Activated CD4-positive, alpha-beta T cell treated with anti-CD3 and anti-CD28 coated beads for 36 hours (primary cell): ENCODE measurements at regions of chr11 and their contacts with region 1.

Region 1: GRCh38 chr11:73376160-73376802 is at the start of gene RELT:
- DNase-seq: peak; percentile 96
- ATAC-seq: peak; percentile 94
- H3K4me3 Mint-ChIP-seq: peak within 1 kb of the TSS; percentile 92
- H3K27ac Mint-ChIP-seq: peak within 1 kb of the TSS; percentile 93
- H3K4me1 Mint-ChIP-seq: peaks cover 33% of the 10 kb centered on the region
- H3K27me3 Mint-ChIP-seq: no peaks in the 10 kb centered on the region
- total RNA-seq, gene RELT: 18.5 to 21.3 TPM

Region 2: GRCh38 chr11:73242251-73243079 is 133.8 kb before region 1 on chr11:
- CTCF ChIA-PET with region 1: no interaction called
- POLR2A ChIA-PET with region 1: no interaction called
- intact Hi-C with region 1: no loop called
- DNase-seq: peak; percentile 87
- ATAC-seq: peak; percentile 93
- H3K4me3 Mint-ChIP-seq: no peak overlapping the region
- H3K27ac Mint-ChIP-seq: no peak overlapping the region
- H3K4me1 Mint-ChIP-seq: peaks cover 2% of the 10 kb centered on the region
- H3K27me3 Mint-ChIP-seq: no peaks in the 10 kb centered on the region

Region 3: GRCh38 chr11:73307323-73308002 is 68.8 kb before region 1 on chr11:
- CTCF ChIA-PET with region 1: no interaction called
- POLR2A ChIA-PET with region 1: no interaction called
- intact Hi-C with region 1: loop called in 1 of 2 experiments (anchors 1 kb)
- DNase-seq: peak; percentile 96
- ATAC-seq: peak; percentile 82
- H3K4me3 Mint-ChIP-seq: peak overlapping the region; percentile 80
- H3K27ac Mint-ChIP-seq: no peak overlapping the region
- H3K4me1 Mint-ChIP-seq: peaks cover 5% of the 10 kb centered on the region
- H3K27me3 Mint-ChIP-seq: peaks cover 20% of the 10 kb centered on the region

Region 4: DNA sequence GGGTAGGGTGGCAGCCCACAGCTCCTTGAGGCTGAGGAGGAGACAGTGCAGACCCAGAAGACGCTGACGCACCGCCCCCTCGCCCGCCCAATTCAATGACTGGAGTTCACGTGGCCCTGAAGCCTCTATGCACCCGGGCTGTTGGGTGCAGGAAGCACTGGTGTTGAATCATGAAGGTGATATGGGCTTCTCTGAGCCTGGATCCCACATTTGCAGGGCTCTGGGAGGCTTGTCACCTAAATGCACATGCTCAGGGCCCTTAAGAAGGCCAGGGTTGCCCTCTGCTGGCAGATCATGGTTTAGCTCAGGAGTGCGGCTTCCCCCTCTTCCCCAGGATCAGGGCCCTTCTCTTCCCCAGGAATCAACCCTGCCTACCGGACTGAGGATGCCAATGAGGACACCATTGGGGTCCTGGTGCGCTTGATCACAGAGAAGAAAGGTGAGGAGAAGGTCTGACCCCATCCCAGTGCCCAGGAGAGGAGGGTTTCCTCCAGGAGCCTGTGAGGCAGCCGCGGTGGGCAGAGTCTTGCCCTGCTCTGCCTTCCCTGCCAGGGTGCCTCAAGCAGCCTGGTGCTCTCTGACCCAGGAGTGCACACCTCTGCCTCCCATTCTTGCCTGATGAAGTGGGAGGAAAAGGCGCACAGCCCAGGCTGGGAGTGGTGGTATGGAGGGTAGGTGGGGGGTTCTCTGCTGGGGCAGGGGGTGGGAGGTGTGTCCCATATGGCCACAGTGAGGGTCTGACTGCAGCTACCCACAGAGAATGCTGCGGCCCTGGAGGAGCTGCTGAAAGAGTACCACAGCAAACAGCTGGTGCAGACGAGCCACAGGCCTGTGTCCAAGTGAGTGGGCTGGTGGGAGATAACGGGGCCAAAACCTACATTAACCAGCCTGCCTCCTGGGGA is 17.4 kb after region 1 on chr11:
- CTCF ChIA-PET with region 1: interaction called, 3 read pairs
- POLR2A ChIA-PET with region 1: interaction called, 3 read pairs
- intact Hi-C with region 1: loop called in 1 of 2 experiments (anchors 1 kb)
- DNase-seq: peak; percentile 77
- ATAC-seq: peak; percentile 87
- H3K4me3 Mint-ChIP-seq: no peak overlapping the region
- H3K27ac Mint-ChIP-seq: no peak overlapping the region
- H3K4me1 Mint-ChIP-seq: no peaks in the 10 kb centered on the region
- H3K27me3 Mint-ChIP-seq: no peaks in the 10 kb centered on the region

Region 5: GRCh38 chr11:73760679-73761402 is 384.6 kb after region 1 on chr11 and contains the start of gene RAB6A:
- CTCF ChIA-PET with region 1: no interaction called
- POLR2A ChIA-PET with region 1: no interaction called
- intact Hi-C with region 1: loop called in 1 of 2 experiments (anchors 1 kb)
- DNase-seq: peak; percentile 100
- ATAC-seq: peak; percentile 93
- H3K4me3 Mint-ChIP-seq: peak within 1 kb of the TSS; percentile 97
- H3K27ac Mint-ChIP-seq: peak within 1 kb of the TSS; percentile 86
- H3K4me1 Mint-ChIP-seq: peaks cover 22% of the 10 kb centered on the region
- H3K27me3 Mint-ChIP-seq: no peaks in the 10 kb centered on the region
- total RNA-seq, gene RAB6A: 57.9 to 58.9 TPM

Region 6: DNA sequence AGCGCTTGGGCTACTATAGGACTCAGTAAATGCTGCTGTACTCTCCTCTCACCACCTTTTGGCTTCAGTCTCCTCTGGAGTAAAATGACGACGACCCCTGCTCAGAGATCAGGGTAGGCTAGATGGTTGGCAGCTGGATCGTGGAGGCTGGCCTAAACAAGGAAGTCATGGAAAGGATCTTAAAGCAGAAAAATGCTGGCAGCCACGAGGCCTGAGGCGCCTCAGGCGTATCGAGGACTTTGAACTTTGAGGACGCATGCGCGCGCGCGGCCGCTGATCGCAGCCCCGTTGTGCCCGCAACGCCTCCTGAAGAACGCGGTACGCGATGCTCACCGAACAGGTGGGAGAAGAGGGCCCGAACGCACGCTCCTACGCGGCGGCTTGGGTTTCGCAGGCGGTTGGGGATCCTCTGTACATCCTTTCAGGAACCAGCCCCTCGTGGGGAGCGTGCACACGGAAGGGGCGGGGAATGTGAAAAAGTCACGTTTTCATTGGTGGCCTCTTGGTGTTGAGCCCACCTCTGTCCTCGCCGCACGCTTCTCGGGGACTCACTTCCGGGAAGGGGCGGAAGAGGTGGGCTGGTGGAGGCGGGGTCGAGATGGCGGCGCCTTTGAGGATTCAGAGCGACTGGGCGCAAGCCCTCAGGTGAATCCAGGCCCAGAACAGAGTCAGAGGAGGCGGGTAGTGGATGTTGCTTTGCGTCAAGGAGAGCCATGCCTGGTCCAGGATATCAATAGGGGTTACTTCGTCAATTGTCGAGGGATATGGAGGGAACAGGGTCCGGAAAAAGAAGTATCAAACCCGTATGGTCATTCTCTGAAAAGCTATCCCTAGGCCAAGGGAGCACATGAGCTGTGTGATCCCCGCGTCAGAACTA is 500.4 kb after region 1 on chr11 and contains the starts of genes COA4 and PAAF1:
- CTCF ChIA-PET with region 1: no interaction called
- POLR2A ChIA-PET with region 1: no interaction called
- intact Hi-C with region 1: loop called in 1 of 2 experiments (anchors 2 kb)
- DNase-seq: peak; percentile 97
- ATAC-seq: peak; percentile 95
- H3K4me3 Mint-ChIP-seq: peak within 1 kb of the TSS; percentile 93
- H3K27ac Mint-ChIP-seq: peak within 1 kb of the TSS; percentile 100
- H3K4me1 Mint-ChIP-seq: peaks cover 32% of the 10 kb centered on the region
- H3K27me3 Mint-ChIP-seq: no peaks in the 10 kb centered on the region
- total RNA-seq, gene COA4: 103 to 112 TPM
- total RNA-seq, gene PAAF1: 34.2 to 34.8 TPM